H1 (cell line): ENCODE measurements at regions of chr15 and their contacts with region 1.

Region 1: GRCh38 chr15:71651750-71652186 is 158.6 kb upstream of the NR2E3 start:
- DNase-seq: peak in 1 of 2 experiments; percentile 53
- H3K4me3 ChIP-seq: no peak overlapping the region
- H3K27ac ChIP-seq: no peak overlapping the region
- H3K4me1 ChIP-seq: peaks cover 0 to 16% (median 5%) of the 10 kb centered on the region in 4 experiments; a peak in 4 of 7 replicates
- H3K27me3 ChIP-seq: no peaks in the 10 kb centered on the region
- CTCF ChIP-seq: peak in 2 of 3 experiments; percentile 66 to 68; a peak in 3 of 4 replicates
- EP300 ChIP-seq: no peak
- POLR2A ChIP-seq: no peak
- RAD21 ChIP-seq: peak; percentile 82 to 88

Region 2: DNA sequence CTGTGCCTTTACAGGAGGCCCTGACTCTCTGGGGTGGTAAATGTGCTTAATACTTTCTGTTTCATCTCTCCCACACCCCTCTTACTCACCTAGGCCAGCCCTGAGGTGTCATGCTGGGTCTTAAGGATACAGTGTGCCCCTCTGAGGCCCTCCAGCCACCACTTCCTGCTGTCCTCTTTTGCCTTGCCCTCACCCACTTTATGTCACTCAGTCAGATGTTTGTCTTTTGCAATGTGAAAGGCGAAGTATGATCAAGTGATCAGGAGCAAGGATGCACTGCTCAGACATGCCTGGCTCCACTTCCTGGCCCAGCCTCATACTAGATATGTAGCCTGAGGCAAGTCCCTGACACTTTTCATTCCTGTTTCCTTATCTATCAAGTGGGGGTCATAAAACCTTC is 180.4 kb before region 1 on chr15:
- CTCF ChIA-PET with region 1: no interaction called
- POLR2A ChIA-PET with region 1: no interaction called
- DNase-seq: no peak
- H3K4me3 ChIP-seq: no peak overlapping the region
- H3K27ac ChIP-seq: no peak overlapping the region
- H3K4me1 ChIP-seq: peaks cover 0 to 3% (median under 1%) of the 10 kb centered on the region in 4 experiments; a peak in 3 of 7 replicates
- H3K27me3 ChIP-seq: no peaks in the 10 kb centered on the region
- CTCF ChIP-seq: no peak
- EP300 ChIP-seq: no peak
- POLR2A ChIP-seq: no peak
- RAD21 ChIP-seq: no peak

Region 3: DNA sequence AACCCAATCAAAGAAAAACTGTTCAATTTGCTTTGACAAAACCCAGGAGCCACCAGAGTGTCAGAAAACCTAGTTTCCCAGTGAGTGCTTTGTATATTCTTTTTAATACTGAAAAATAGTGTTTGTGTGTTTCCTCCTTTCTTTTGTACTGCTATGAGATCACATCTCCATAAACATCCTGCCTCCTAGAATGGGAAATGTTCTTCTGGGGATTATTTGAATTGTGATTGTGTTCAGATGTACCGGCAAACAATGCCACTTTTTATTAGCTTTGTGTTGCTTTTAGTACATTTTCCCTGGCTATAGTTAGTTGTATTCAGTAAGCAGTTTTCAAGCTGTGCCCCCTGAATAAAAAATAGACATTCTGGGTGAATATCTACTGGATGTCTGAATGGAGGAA is 10.5 kb after region 1 on chr15:
- CTCF ChIA-PET with region 1: interaction called, 11 read pairs
- POLR2A ChIA-PET with region 1: no interaction called
- DNase-seq: no peak
- H3K4me3 ChIP-seq: no peak overlapping the region
- H3K27ac ChIP-seq: no peak overlapping the region
- H3K4me1 ChIP-seq: no peaks in the 10 kb centered on the region; a peak in 1 of 7 replicates
- H3K27me3 ChIP-seq: no peaks in the 10 kb centered on the region
- CTCF ChIP-seq: no peak
- EP300 ChIP-seq: no peak
- POLR2A ChIP-seq: no peak
- RAD21 ChIP-seq: no peak